Activated CD4-positive, alpha-beta memory T cell treated with anti-CD3 and anti-CD28 coated beads, Interleukin-2, amount 10 ng/mL, durations not matched to agents 7 days and 5 days (primary cell): ENCODE measurements at regions of chrX and their contacts with region 1.

Region 1: DNA sequence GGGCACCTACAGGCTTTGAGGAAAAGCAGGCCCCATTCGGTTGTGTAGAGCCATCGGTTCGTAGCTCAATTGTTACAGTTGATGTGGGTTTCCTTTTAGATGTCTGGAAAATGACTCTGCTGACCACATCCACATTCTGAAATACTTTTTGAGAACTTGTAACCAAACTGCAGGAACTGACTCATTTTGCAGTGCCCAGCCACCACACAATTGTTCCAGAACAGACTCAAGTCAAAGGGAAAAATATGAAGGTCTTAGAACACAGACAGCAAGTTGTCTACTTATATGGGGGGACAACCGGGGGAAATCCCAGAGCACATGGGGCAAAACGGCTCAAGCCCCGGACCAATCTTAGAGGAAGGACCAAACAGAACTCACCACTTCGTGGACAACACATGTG is 557.6 kb upstream of the DIPK2B start:
- DNase-seq: peak; percentile 67
- H3K4me3 Mint-ChIP-seq: peak overlapping the region; percentile 72
- H3K27ac Mint-ChIP-seq: peak overlapping the region; percentile 92
- H3K4me1 Mint-ChIP-seq: peaks cover 71% of the 10 kb centered on the region
- H3K27me3 Mint-ChIP-seq: no peaks in the 10 kb centered on the region

Region 2: GRCh38 chrX:45689971-45690370 is 68.3 kb before region 1 on chrX:
- CTCF ChIA-PET with region 1: no interaction called
- POLR2A ChIA-PET with region 1: no interaction called
- DNase-seq: no peak
- H3K4me3 Mint-ChIP-seq: no peak overlapping the region
- H3K27ac Mint-ChIP-seq: no peak overlapping the region
- H3K4me1 Mint-ChIP-seq: no peaks in the 10 kb centered on the region
- H3K27me3 Mint-ChIP-seq: no peaks in the 10 kb centered on the region

Region 3: DNA sequence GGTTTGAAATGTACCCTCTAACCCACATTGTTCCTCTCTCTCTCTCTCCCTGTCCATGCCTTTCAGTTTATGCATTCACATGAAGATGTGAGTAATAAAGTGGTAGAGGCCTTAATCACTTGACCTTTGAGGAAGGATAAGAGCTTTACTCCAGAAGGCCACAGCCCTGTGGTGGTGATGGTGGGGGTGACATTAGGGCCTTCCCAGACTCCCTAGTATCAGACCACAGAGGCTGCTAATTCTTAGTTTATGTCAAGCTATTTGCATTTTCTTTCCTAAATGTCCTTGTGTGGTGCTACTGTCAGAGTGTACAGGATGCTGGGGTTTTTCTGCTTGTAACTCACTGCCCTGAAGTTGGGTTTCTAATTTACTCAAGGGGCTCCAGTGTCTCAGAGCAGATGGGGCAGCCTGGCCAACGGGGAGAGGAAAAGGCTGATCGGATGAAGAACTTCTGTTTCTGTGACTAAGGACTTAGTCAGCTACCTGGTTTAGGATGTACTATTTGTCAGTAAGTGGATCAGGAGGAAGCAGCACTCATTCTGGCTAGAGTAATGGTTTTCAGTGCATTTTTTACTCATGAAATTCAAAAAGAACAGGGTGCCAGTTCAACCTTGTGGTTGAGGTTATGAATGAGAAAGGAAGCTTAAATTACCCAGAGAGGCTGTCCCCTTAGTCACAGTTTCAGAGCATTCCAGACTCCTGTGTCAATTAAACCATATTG is 48.1 kb before region 1 on chrX:
- CTCF ChIA-PET with region 1: no interaction called
- POLR2A ChIA-PET with region 1: interaction called, 11 read pairs
- DNase-seq: peak; percentile 51
- H3K4me3 Mint-ChIP-seq: peak overlapping the region; percentile 35
- H3K27ac Mint-ChIP-seq: peak overlapping the region; percentile 81
- H3K4me1 Mint-ChIP-seq: peaks cover 38% of the 10 kb centered on the region
- H3K27me3 Mint-ChIP-seq: no peaks in the 10 kb centered on the region

Region 4: DNA sequence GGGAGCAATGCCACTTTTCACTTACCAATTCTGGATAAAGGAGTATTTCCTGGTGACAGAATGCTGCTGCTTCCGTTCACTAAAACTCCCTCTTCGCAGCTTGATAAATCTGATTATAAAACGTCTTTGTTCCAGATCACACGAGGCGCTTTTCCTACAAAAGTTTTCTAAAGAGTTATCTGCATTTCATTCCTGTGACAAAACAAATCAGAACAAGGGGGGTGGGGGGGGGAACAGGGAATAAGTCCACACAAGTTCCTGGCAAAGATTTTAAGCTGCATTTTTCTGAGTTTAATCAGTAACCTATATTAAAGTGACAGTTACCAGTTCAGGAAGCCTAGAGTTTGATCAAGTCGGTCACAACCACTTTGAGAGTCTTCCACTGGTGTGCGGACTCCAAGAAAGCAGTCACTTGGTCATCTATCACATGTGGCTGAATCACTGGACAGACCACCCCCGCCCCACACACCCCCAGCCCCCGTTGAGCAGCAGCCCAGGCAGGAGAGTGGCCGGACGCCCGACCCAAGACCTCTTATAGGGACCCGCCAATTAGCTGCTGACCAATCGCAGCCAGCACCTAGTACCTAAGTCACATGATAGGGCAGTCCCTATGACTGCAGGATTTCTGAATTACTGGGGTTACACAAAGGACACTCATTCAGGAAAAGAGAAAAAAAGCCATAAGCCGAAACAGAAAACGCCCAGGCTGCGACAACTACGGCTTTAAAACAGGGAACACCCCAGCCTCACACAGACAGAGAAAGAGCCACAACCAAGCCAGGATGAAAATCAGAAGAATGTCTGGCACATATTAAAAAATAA is 11.7 kb after region 1 on chrX:
- CTCF ChIA-PET with region 1: interaction called, 3 read pairs
- POLR2A ChIA-PET with region 1: interaction called, 167 read pairs
- DNase-seq: peak; percentile 49
- H3K4me3 Mint-ChIP-seq: peak overlapping the region; percentile 86
- H3K27ac Mint-ChIP-seq: peak overlapping the region; percentile 87
- H3K4me1 Mint-ChIP-seq: peaks cover 59% of the 10 kb centered on the region
- H3K27me3 Mint-ChIP-seq: no peaks in the 10 kb centered on the region

Region 5: GRCh38 chrX:45806410-45807121 is 48.2 kb after region 1 on chrX:
- CTCF ChIA-PET with region 1: interaction called, 6 read pairs
- POLR2A ChIA-PET with region 1: interaction called, 16 read pairs
- DNase-seq: peak; percentile 58
- H3K4me3 Mint-ChIP-seq: peak overlapping the region; percentile 76
- H3K27ac Mint-ChIP-seq: peak overlapping the region; percentile 93
- H3K4me1 Mint-ChIP-seq: peaks cover 90% of the 10 kb centered on the region
- H3K27me3 Mint-ChIP-seq: no peaks in the 10 kb centered on the region

Region 6: DNA sequence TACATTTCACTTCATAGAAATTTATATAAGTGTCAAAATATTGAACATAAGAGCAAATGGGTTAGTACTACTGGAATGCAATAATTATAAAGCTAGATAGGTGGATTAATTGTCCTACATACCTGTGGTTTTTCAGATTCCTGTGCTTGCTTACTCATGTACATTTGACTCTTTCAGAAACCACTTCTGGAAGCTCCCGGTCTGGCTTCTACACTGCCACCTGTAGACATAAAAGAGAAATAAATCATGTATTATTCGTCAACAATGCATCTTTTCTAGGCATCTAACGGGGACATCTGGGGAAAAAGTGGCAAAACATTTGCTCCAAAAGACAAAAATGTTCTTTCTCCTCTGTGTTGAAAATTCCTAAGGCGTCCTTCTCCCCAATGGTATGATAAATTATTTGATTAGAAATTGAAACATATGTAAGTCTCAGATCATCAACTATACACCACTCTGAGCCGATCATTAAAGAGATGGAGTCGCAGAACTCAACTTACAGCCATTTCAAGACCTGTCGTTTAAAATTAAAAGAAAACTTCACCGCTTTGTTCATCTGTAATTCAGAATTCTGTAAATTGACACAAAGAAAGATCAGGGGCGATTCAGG is 91.0 kb after region 1 on chrX:
- CTCF ChIA-PET with region 1: no interaction called
- POLR2A ChIA-PET with region 1: interaction called, 39 read pairs
- DNase-seq: peak; percentile 30
- H3K4me3 Mint-ChIP-seq: peak overlapping the region; percentile 99
- H3K27ac Mint-ChIP-seq: peak overlapping the region; percentile 89
- H3K4me1 Mint-ChIP-seq: peaks cover 54% of the 10 kb centered on the region
- H3K27me3 Mint-ChIP-seq: no peaks in the 10 kb centered on the region